ENCODE measurements at regions of chr15 and their contacts with region 1.

Region 1: DNA sequence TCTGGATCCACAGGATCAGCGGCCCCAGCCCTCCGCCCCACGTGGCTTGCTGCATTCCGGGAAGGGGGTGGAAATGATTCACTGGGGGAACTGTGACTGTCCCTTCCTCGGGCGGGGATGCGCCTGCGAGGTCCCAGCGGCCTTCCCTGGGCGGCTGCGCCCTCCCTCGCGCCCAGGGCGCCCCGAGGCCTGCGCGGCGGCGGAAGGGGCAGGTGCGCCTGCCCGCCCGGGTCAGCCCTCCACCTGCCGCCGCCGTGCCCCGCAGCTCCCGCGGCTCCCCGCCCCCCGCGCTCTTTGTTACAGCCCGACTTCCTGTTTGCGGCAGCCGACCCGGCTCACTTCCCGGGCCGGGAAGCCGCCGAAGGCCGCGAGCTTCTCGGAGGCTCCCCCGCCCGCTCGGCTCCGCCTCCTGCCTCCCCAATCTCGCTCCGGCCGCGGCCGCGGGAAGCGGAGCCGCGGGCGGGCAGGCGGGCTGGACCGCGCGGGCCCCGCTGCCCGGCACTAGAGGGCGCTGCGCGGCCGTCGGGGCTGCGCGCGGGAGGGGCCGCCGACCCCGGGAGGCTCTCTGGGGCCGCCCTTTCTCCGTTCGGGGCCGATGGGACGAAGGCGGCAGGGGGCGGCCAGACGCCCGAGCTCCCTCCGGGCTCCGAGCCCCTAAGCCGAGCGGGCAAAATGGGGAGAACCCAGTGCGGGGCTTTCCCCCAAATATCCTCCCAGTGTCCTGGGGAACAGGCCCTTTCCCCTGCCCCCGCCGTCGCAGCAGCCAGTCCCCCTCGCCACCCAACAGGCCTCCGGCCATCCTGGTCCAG is 11.5 kb upstream of the CHAC1 start:
- DNase-seq: peak; percentile 92
- H3K4me3 Mint-ChIP-seq: peak overlapping the region; percentile 88
- H3K27ac Mint-ChIP-seq: peak overlapping the region; percentile 87
- H3K4me1 Mint-ChIP-seq: peaks cover 40% of the 10 kb centered on the region
- H3K27me3 Mint-ChIP-seq: no peaks in the 10 kb centered on the region

Region 2: DNA sequence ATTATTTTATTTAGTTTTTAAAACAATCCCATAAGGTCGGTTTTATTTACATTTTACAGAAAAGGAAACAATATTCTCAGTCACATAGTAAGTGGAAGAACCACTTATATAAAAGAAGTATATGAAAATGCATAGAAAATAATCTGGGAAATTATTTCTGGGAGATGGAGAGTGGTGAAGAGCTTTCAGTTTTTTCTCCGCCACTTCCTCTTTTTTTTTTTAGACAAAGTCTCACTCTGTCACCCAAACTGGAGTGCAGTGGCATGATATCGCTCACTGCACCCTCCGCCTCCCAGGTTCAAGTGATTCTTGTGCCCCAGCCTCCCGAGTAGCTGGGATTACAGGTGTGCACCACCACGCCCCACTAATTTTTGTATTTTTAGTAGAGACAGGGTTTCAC is 225.6 kb before region 1 on chr15:
- intact Hi-C with region 1: no loop called
- DNase-seq: no peak
- H3K4me3 Mint-ChIP-seq: no peak overlapping the region
- H3K27ac Mint-ChIP-seq: no peak overlapping the region
- H3K4me1 Mint-ChIP-seq: peaks cover 7% of the 10 kb centered on the region
- H3K27me3 Mint-ChIP-seq: no peaks in the 10 kb centered on the region

Region 3: GRCh38 chr15:40952901-40953712 is 11.4 kb after region 1 on chr15 and contains the start of gene CHAC1:
- intact Hi-C with region 1: loop called (anchors 1 kb)
- DNase-seq: peak; percentile 99
- H3K4me3 Mint-ChIP-seq: peak within 1 kb of the TSS; percentile 92
- H3K27ac Mint-ChIP-seq: peak within 1 kb of the TSS; percentile 91
- H3K4me1 Mint-ChIP-seq: peaks cover 32% of the 10 kb centered on the region
- H3K27me3 Mint-ChIP-seq: no peaks in the 10 kb centered on the region
- total RNA-seq, gene CHAC1: 8.4 and 9.8 TPM in 2 replicates

Region 4: GRCh38 chr15:41079717-41080116 is 138.0 kb after region 1 on chr15:
- intact Hi-C with region 1: no loop called
- DNase-seq: no peak
- H3K4me3 Mint-ChIP-seq: no peak overlapping the region
- H3K27ac Mint-ChIP-seq: no peak overlapping the region
- H3K4me1 Mint-ChIP-seq: no peaks in the 10 kb centered on the region
- H3K27me3 Mint-ChIP-seq: no peaks in the 10 kb centered on the region

Measured in activated CD4-positive, alpha-beta T cell treated with anti-CD3 and anti-CD28 coated beads, Interleukin-2, amount 10 ng/mL, durations not matched to agents 24 days and 14 days (primary cell).